ENCODE measurements at regions of chr9 and their contacts with region 1.

Region 1: DNA sequence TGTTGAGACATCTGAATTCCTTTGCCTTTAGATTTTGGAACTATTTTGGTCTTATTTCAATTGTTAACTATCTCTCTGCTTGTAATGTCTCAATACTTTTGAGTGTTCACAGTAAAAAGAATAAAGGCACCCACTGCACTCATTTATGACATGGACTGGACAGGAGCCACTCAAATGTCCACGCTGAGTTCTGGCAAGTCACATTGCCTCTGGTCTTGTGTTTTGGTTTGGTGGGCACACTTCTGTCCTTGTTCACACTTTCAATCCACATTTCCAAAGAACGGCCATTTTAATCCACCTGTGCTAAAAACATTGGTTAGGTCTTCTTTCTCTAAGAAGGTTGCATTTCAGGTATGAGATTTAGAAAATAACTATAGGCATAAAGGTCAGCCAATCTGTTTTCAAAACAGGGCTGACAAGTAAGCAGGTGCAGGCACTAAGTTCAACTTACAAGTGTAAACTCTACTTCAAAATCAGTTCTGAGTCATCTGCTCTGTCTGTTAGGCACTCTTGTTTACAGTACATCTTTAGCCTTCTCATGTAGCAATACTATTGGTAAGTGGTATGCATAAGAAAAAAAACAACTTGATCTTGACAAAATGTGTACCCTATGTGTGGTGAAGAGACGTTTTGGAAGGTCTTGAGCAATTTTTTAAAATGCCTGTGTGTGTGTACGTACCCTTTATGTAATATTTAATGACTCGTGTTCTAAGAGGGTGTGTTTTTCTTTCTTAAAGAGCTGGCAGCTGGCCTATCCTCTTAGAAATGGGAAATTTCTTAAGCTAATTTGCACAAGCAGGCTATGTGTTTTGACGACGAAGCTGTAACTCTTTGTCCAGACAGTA is 31.5 kb upstream of the ZFAND5 start:
- DNase-seq: peak; percentile 84
- H3K4me3 Mint-ChIP-seq: no peak overlapping the region
- H3K27ac Mint-ChIP-seq: peak overlapping the region; percentile 76
- H3K4me1 Mint-ChIP-seq: peaks cover 14% of the 10 kb centered on the region
- H3K27me3 Mint-ChIP-seq: no peaks in the 10 kb centered on the region
- CTCF ChIP-seq: no peak

Region 2: GRCh38 chr9:72443855-72444254 is 47.4 kb after region 1 on chr9:
- CTCF ChIA-PET with region 1: interaction called, 4 read pairs
- POLR2A ChIA-PET with region 1: interaction called, 10 read pairs
- intact Hi-C with region 1: loop called (anchors 5 kb)
- DNase-seq: no peak
- H3K4me3 Mint-ChIP-seq: no peak overlapping the region
- H3K27ac Mint-ChIP-seq: peak overlapping the region; percentile 1
- H3K4me1 Mint-ChIP-seq: peaks cover 31% of the 10 kb centered on the region
- H3K27me3 Mint-ChIP-seq: no peaks in the 10 kb centered on the region
- CTCF ChIP-seq: no peak